T-cell (primary cell): ENCODE measurements at regions of chr22 and their contacts with region 1.

Region 1: DNA sequence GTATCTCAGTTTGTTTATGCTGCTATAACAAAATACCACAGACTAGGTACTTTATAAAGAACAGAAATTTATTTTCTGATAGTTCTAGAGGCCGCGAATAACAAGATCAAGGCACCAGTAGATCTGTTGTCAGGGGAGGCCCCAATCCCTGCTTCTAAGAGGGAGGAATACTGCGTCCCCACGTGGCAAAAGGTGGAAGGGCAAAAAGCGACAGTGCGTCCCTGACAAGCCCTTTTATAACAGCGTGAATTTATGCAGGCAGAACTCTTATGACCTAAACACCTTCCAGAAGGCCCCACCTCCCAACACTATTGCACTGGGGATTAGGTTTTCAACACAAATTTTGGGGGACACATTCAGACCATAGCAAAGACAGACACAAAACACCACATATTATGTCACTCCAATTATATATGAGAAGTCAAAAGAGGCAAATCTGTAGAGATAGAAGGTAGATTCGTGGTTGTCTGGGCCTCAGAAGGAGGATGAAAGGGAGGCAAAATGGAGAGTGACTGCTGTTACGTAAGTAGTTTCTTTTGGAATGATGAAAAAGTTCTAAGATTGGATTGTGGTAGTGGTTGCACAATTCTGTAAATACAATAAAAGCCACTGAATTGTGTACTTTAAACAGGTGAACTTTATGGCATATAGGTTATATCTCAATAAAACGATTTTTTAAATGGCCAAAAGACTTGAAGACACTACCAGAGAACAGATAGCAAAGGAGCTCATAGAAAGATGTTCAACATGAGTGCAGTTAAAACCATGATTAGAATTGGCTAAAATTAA is 30.1 kb upstream of the TNRC6B start:
- DNase-seq: no peak
- ATAC-seq: no peak
- H3K4me3 ChIP-seq: no peak overlapping the region
- H3K4me3 Mint-ChIP-seq: no peak overlapping the region
- H3K27ac ChIP-seq: no peak overlapping the region
- H3K27ac Mint-ChIP-seq: peak overlapping the region in 1 of 2 donors; percentile 29
- H3K4me1 ChIP-seq: no peaks in the 10 kb centered on the region
- H3K4me1 Mint-ChIP-seq: peaks cover 5 to 20% (median 15%) of the 10 kb centered on the region in 3 donors
- H3K27me3 ChIP-seq: no peaks in the 10 kb centered on the region
- H3K27me3 Mint-ChIP-seq: no peaks in the 10 kb centered on the region

Region 2: DNA sequence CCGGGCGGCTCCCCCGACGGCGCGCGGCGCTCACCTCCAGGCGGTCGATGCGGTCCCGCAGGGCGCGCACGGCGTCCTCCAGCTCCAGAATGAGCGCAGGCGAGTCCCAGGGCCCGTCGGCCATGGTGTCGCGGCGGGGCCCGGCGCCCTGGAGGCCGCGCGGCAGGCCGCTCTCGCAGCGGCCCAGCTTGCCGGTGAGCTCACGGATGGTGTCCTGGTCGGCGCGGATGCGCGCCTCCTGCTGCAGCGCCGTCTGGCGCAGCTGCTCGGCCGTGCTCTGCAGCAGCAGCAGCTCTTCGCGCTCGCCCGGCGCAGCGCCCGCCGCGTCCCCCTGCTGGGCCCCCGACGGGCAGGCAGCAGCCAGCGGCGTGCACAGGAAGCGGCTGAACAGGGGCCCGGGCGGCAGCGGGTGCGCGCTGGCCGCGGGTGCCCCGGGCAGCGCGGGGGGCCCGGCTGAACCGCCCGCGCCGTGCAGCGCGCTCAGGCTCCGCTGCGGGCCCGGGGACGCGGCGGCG is 1304.3 kb before region 1 on chr22:
- CTCF ChIA-PET with region 1: no interaction called
- POLR2A ChIA-PET with region 1: interaction called in 1 of 2 experiments, 10 read pairs
- DNase-seq: peak; percentile 12 to 79 (median 44)
- ATAC-seq: peak; percentile 86 to 90 (median 88)
- H3K4me3 ChIP-seq: peak overlapping the region in 1 of 2 donors; percentile 53
- H3K4me3 Mint-ChIP-seq: peak overlapping the region in 1 of 3 donors; percentile 87
- H3K27ac ChIP-seq: no peak overlapping the region
- H3K27ac Mint-ChIP-seq: no peak overlapping the region
- H3K4me1 ChIP-seq: peaks cover 0 to 24% of the 10 kb centered on the region in 2 experiments
- H3K4me1 Mint-ChIP-seq: peaks cover 29 to 33% (median 31%) of the 10 kb centered on the region in 3 donors
- H3K27me3 ChIP-seq: peaks cover 6 to 46% of the 10 kb centered on the region in 2 experiments
- H3K27me3 Mint-ChIP-seq: peaks cover 5 to 27% of the 10 kb centered on the region in 2 donors

Region 3: GRCh38 chr22:40128989-40129388 is 18.6 kb before region 1 on chr22:
- CTCF ChIA-PET with region 1: no interaction called
- POLR2A ChIA-PET with region 1: interaction called in 1 of 2 experiments, 14 read pairs
- DNase-seq: peak in 11 of 35 experiments; percentile 7 to 37 (median 15)
- ATAC-seq: peak in 2 of 4 experiments; percentile 53 to 70
- H3K4me3 ChIP-seq: no peak overlapping the region
- H3K4me3 Mint-ChIP-seq: peak overlapping the region in 1 of 3 donors; percentile 51
- H3K27ac ChIP-seq: peak overlapping the region; percentile 25
- H3K27ac Mint-ChIP-seq: peak overlapping the region; percentile 11 to 26
- H3K4me1 ChIP-seq: peaks cover 3 to 17% of the 10 kb centered on the region in 2 experiments
- H3K4me1 Mint-ChIP-seq: peaks cover 31 to 38% (median 32%) of the 10 kb centered on the region in 3 donors
- H3K27me3 ChIP-seq: no peaks in the 10 kb centered on the region
- H3K27me3 Mint-ChIP-seq: no peaks in the 10 kb centered on the region

Region 4: GRCh38 chr22:40300884-40301672 is 153.5 kb after region 1 on chr22:
- CTCF ChIA-PET with region 1: no interaction called
- POLR2A ChIA-PET with region 1: interaction called in 1 of 2 experiments, 10 read pairs
- DNase-seq: no peak
- ATAC-seq: no peak
- H3K4me3 ChIP-seq: no peak overlapping the region
- H3K4me3 Mint-ChIP-seq: no peak overlapping the region
- H3K27ac ChIP-seq: no peak overlapping the region
- H3K27ac Mint-ChIP-seq: no peak overlapping the region
- H3K4me1 ChIP-seq: no peaks in the 10 kb centered on the region
- H3K4me1 Mint-ChIP-seq: peaks cover 5 to 11% (median 6%) of the 10 kb centered on the region in 3 donors
- H3K27me3 ChIP-seq: no peaks in the 10 kb centered on the region
- H3K27me3 Mint-ChIP-seq: no peaks in the 10 kb centered on the region